ENCODE measurements at regions of chr11 and their contacts with region 1.

Region 1: GRCh38 chr11:119381181-119381988 is at the start of gene USP2:
- DNase-seq: peak; percentile 95 to 100 (median 99)

Region 2: DNA sequence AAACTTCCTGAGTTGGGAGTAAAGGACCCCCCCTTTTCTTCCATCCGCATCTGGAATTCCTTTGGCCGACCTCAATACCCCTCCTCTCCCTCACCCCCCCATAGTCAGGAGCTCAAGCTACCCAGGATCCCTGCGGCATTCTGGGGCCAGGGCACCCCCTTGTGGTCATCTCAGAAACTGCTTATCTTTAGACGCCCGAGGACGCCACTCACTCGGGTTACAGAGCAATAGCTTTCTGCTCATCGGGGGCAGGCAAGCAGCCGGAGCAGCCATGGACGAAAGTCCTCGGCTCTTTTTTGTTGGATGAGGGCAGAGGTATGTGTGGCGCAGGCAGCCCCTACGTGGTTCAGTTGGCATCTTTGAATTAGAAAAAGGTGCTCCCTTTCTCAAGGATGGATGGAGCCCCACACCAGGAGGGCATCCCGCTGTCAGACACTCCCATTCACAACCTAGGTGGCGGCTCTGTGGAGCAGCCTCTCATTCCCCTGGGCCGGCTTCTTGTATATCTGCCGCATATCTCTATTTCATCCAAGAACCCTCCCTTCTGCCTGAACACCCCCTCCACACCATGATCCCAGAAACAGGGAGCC is 43.0 kb before region 1 on chr11:
- intact Hi-C with region 1: loop called (anchors 5 kb)
- DNase-seq: peak in 7 of 10 donors; percentile 78 to 97 (median 83)

Region 3: DNA sequence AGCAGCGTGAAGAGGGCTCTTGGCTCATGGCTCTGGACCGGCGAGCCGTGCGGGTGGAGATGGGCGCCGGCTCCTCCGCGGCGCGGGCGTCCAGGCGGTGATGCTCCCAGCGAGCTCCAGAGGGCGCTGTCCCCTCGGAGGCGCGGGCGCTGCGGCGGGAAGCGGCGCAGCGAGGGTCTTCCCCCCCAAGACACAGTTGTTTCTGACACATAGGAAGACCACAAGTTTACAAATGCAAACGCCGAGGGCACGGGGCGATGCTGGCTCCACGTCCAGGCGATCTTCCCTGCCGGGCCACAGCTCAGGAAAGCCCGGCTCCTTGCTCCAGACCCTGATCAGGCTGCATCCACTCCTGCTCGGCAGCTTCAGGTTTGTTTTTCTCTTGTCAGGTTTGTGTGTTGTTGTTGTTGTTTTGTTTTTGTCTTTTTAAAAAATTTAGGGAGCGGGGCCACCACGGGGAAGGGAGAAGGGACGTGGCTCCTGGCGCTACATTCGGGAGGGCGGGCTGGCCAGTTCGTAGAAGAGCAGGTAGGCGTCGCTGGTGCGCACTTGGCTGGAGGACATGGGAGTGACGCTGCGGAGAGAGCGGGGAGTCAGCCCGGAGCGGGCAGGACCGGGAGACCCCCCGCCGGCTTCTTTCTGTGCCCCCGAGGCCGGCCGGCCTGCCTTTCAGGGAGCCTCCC is 24.9 kb before region 1 on chr11:
- intact Hi-C with region 1: loop called (anchors 2 kb)
- DNase-seq: peak in 8 of 10 donors; percentile 70 to 96 (median 79)